ENCODE measurements at regions of chr4 and their contacts with region 1.

Region 1: GRCh38 chr4:160020804-160021203 is 917.9 kb downstream of the RAPGEF2 start:
- DNase-seq: no peak

Region 2: DNA sequence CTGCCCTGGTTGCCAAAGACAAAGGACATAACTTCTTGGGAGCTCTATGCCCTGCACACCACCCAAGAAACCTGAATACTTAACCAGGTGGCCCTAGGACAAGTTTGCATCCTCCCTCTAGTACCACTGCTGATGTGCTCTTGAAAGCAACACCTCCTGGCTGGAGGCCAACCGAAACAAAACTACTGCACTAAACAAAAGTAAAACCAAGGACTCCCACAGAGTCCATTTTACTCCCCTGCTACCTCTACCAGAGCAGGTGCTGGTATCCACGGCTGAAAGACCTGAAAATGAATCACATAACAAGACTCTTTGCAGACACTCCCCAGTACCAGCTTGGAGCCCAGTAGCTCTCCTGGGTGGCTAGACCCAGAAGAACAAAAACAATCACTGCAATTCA is 23.9 kb after region 1 on chr4:
- intact Hi-C with region 1: loop called in 1 of 2 experiments (anchors 1 kb)
- DNase-seq: no peak

Measured in posterior vena cava (tissue), 2 donors.